Activated naive CD4-positive, alpha-beta T cell treated with anti-CD3 and anti-CD28 coated beads for 36 hours (primary cell): ENCODE measurements at regions of chr10 and their contacts with region 1.

Region 1: GRCh38 chr10:32338262-32338661 is 8.7 kb downstream of the EPC1 start:
- DNase-seq: no peak
- H3K4me3 Mint-ChIP-seq: no peak overlapping the region
- H3K27ac Mint-ChIP-seq: peak overlapping the region; percentile 44
- H3K4me1 Mint-ChIP-seq: peaks cover 92% of the 10 kb centered on the region
- H3K27me3 Mint-ChIP-seq: no peaks in the 10 kb centered on the region

Region 2: GRCh38 chr10:32256613-32257437 is 81.4 kb before region 1 on chr10:
- CTCF ChIA-PET with region 1: interaction called, 14 read pairs
- intact Hi-C with region 1: no loop called
- DNase-seq: peak; percentile 81
- H3K4me3 Mint-ChIP-seq: no peak overlapping the region
- H3K27ac Mint-ChIP-seq: no peak overlapping the region
- H3K4me1 Mint-ChIP-seq: peaks cover 8% of the 10 kb centered on the region
- H3K27me3 Mint-ChIP-seq: no peaks in the 10 kb centered on the region